CD4-positive, alpha-beta memory T cell (primary cell): ENCODE measurements at regions of chr9 and their contacts with region 1.

Region 1: GRCh38 chr9:98045234-98046179 is 11.0 kb upstream of the NANS start:
- DNase-seq: peak; percentile 60 to 80 (median 71)
- H3K4me3 ChIP-seq: peak overlapping the region; percentile 9 to 15
- H3K4me3 Mint-ChIP-seq: peak overlapping the region; percentile 65 to 88 (median 80)
- H3K27ac ChIP-seq: peak overlapping the region; percentile 9
- H3K27ac Mint-ChIP-seq: peak overlapping the region; percentile 29 to 97 (median 89)
- H3K4me1 ChIP-seq: peaks cover 22% of the 10 kb centered on the region
- H3K4me1 Mint-ChIP-seq: peaks cover 11 to 31% (median 15%) of the 10 kb centered on the region in 4 donors
- H3K27me3 ChIP-seq: no peaks in the 10 kb centered on the region
- H3K27me3 Mint-ChIP-seq: no peaks in the 10 kb centered on the region

Region 2: GRCh38 chr9:98034593-98035546 is 10.6 kb before region 1 on chr9:
- CTCF ChIA-PET with region 1: interaction called, 11 read pairs
- POLR2A ChIA-PET with region 1: no interaction called
- intact Hi-C with region 1: no loop called
- DNase-seq: peak; percentile 80 to 88 (median 84)
- H3K4me3 ChIP-seq: no peak overlapping the region
- H3K4me3 Mint-ChIP-seq: peak overlapping the region in 3 of 8 donors; percentile 32 to 64 (median 38)
- H3K27ac ChIP-seq: no peak overlapping the region
- H3K27ac Mint-ChIP-seq: peak overlapping the region in 5 of 7 donors; percentile 28 to 64 (median 61)
- H3K4me1 ChIP-seq: peaks cover 6% of the 10 kb centered on the region
- H3K4me1 Mint-ChIP-seq: peaks cover 6 to 9% (median 6%) of the 10 kb centered on the region in 4 donors
- H3K27me3 ChIP-seq: no peaks in the 10 kb centered on the region
- H3K27me3 Mint-ChIP-seq: peaks cover 1 to 4% of the 10 kb centered on the region in 2 donors

Region 3: GRCh38 chr9:98056269-98057137 is 11.0 kb after region 1 on chr9 and contains the start of gene NANS:
- CTCF ChIA-PET with region 1: interaction called, 6 read pairs
- POLR2A ChIA-PET with region 1: interaction called, 16 read pairs
- intact Hi-C with region 1: loop called (anchors 1 kb)
- DNase-seq: peak; percentile 88 to 94 (median 90)
- H3K4me3 ChIP-seq: peak within 1 kb of the TSS; percentile 56 to 76
- H3K4me3 Mint-ChIP-seq: peak within 1 kb of the TSS; percentile 96 to 100 (median 99)
- H3K27ac ChIP-seq: peak within 1 kb of the TSS; percentile 82
- H3K27ac Mint-ChIP-seq: peak within 1 kb of the TSS; percentile 90 to 99 (median 99)
- H3K4me1 ChIP-seq: peaks cover 22% of the 10 kb centered on the region
- H3K4me1 Mint-ChIP-seq: peaks cover 12 to 32% (median 22%) of the 10 kb centered on the region in 4 donors
- H3K27me3 ChIP-seq: no peaks in the 10 kb centered on the region
- H3K27me3 Mint-ChIP-seq: no peaks in the 10 kb centered on the region
- total RNA-seq, gene NANS: 22.1 to 23.2 TPM

Region 4: DNA sequence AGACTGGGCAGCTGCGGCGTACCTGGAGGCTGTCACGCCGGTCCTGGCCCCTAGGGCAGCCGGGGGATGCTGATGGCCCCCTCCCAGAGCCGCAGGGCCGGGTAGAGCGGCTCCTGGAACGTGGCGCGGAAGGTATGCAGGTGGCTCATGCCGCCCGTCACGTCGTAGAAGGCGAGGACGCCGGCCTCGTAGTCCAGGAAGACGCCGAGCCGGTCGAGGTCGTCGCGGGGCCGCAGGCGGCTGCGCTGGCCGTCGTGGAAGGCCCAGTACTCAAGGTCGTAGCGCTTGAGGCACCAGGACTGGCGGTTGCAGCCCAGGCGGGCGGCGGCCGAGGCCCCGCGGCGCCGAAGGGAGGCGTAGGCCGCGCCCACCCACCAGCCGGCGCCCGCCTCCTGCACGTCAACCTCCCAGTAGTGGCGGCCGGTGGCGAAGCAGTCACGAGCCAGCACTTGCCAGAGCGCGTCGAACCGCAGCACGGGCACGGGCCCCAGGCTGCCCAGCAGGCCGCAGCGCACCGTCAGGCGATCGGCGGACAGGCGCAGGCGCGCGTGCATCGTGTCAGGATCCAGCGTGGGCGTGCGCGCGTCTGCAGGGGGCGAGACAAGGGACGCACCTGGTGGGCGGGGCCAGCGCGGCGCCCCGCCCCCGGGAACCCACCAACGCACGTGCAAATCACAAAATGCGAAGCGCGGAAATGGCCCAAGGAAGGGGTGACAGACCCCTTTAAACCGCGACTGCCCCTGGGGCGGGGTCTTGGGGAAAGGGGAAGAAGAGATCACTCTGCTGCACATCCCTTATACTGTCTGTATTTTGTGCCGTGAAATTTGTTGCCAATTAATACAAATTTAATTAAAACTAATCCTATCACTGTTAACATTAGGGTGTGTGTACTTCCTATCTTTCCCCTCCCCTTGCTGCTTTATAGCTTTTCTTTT is 42.2 kb after region 1 on chr9:
- CTCF ChIA-PET with region 1: no interaction called
- POLR2A ChIA-PET with region 1: no interaction called
- intact Hi-C with region 1: no loop called
- DNase-seq: peak in 3 of 5 donors; percentile 35 to 51 (median 43)
- H3K4me3 ChIP-seq: no peak overlapping the region
- H3K4me3 Mint-ChIP-seq: peak overlapping the region in 3 of 8 donors; percentile 31 to 66 (median 39)
- H3K27ac ChIP-seq: no peak overlapping the region
- H3K27ac Mint-ChIP-seq: peak overlapping the region in 1 of 7 donors; percentile 53
- H3K4me1 ChIP-seq: peaks cover 2% of the 10 kb centered on the region
- H3K4me1 Mint-ChIP-seq: peaks cover 25 to 60% (median 40%) of the 10 kb centered on the region in 4 donors
- H3K27me3 ChIP-seq: no peaks in the 10 kb centered on the region
- H3K27me3 Mint-ChIP-seq: no peaks in the 10 kb centered on the region

Region 5: GRCh38 chr9:98222885-98223640 is 177.6 kb after region 1 on chr9:
- CTCF ChIA-PET with region 1: no interaction called
- POLR2A ChIA-PET with region 1: no interaction called
- intact Hi-C with region 1: no loop called
- DNase-seq: no peak
- H3K4me3 ChIP-seq: no peak overlapping the region
- H3K4me3 Mint-ChIP-seq: no peak overlapping the region
- H3K27ac ChIP-seq: no peak overlapping the region
- H3K27ac Mint-ChIP-seq: peak overlapping the region in 4 of 7 donors; percentile 2 to 40 (median 24)
- H3K4me1 ChIP-seq: no peaks in the 10 kb centered on the region
- H3K4me1 Mint-ChIP-seq: peaks cover 0 to 10% (median 3%) of the 10 kb centered on the region in 4 donors
- H3K27me3 ChIP-seq: no peaks in the 10 kb centered on the region
- H3K27me3 Mint-ChIP-seq: no peaks in the 10 kb centered on the region